ENCODE measurements at regions of chr2 and their contacts with region 1.

Region 1: DNA sequence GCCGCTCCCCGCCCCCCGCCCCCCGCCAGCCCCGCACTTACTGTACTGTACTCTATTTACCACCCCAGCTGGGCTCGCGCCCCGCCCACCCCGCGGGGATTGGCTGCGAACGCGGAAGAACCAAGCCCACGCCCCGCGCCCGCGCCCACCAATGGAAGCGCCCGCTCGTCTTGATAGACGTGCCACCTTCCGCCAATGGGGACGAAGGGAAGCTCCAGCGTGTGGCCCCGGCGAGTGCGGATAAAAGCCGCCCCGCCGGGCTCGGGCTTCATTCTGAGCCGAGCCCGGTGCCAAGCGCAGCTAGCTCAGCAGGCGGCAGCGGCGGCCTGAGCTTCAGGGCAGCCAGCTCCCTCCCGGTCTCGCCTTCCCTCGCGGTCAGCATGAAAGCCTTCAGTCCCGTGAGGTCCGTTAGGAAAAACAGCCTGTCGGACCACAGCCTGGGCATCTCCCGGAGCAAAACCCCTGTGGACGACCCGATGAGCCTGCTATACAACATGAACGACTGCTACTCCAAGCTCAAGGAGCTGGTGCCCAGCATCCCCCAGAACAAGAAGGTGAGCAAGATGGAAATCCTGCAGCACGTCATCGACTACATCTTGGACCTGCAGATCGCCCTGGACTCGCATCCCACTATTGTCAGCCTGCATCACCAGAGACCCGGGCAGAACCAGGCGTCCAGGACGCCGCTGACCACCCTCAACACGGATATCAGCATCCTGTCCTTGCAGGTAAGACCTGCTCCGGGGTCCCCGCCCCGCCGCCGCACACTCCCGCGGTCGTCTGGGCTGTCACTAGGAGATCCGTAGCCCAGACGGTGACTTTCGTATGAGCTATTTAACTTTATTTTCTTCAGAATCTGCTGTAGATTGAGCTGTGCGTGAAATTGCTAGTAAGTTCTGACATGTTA is at the start of gene ID2:
- DNase-seq: peak; percentile 100
- H3K4me3 ChIP-seq: peak within 1 kb of the TSS; percentile 62 to 64
- H3K27ac ChIP-seq: peak within 1 kb of the TSS; percentile 97 to 98
- H3K4me1 ChIP-seq: peaks cover 5% of the 10 kb centered on the region
- H3K27me3 ChIP-seq: no peaks in the 10 kb centered on the region
- CTCF ChIP-seq: peak in 1 of 4 experiments; percentile 35
- POLR2A ChIP-seq: peak; percentile 99
- total RNA-seq, gene ID2: 172 to 238 TPM

Region 2: DNA sequence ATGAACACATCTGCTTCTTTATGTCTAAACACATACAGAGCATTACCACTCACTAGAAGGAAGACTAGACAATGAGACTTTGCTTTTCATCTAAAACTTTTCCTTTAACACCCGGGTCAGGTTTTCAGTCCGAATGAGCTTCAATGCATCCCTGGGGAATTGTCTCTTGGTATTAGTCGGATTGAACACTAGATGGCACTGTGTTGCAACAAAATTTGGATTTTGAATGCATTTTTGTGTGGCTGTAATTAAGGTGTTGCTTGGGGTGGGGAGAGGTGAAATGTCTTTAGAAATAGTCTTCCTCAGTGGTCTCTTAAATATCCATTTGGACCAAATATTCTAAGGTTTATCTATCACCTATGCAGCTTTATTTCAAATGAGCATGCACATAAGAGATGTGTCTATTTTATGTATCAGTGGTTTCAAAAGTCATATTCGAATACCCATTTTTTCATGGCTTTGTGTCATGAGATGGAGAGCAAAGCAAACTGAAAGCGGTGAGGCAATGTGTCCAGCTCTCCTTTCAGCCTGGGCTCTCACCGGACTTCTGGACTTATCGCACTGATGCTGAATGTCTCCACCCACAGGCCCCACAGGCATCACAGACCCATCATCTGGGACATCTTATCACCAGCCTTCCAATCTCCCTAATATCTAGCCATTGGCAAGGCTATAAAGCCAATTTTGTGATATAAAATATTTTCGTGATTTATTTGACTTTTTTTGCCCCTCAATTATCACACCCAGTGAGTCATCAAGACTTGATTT is 1254.6 kb before region 1 on chr2:
- intact Hi-C with region 1: loop called (anchors 2 kb)
- DNase-seq: no peak
- H3K4me3 ChIP-seq: no peak overlapping the region
- H3K27ac ChIP-seq: no peak overlapping the region
- H3K4me1 ChIP-seq: no peaks in the 10 kb centered on the region
- H3K27me3 ChIP-seq: no peaks in the 10 kb centered on the region
- CTCF ChIP-seq: peak; percentile 43 to 73 (median 66)
- POLR2A ChIP-seq: no peak

Region 3: DNA sequence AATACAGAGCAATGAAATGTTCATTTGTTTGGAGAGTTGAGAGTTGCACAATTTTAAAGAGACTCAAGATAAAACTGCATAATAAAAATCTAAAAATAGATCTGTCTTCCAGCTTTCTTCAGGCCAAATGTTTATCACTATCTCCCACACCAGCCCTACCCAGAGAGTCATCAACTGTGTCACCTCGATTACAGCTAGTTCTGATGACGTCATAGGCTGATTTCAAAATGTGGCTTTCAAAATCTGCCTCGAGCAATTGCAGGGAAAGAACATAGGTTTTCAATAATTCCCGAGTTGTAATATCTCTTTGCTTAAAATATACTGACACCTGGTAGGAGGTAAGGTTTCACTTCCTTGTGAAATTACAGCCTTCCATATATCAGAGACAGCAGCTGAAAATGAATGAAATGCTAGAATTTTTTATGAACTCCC is 677.8 kb before region 1 on chr2:
- intact Hi-C with region 1: loop called (anchors 2 kb)
- DNase-seq: no peak
- H3K4me3 ChIP-seq: no peak overlapping the region
- H3K27ac ChIP-seq: no peak overlapping the region
- H3K4me1 ChIP-seq: no peaks in the 10 kb centered on the region
- H3K27me3 ChIP-seq: no peaks in the 10 kb centered on the region
- CTCF ChIP-seq: no peak
- POLR2A ChIP-seq: no peak

Region 4: DNA sequence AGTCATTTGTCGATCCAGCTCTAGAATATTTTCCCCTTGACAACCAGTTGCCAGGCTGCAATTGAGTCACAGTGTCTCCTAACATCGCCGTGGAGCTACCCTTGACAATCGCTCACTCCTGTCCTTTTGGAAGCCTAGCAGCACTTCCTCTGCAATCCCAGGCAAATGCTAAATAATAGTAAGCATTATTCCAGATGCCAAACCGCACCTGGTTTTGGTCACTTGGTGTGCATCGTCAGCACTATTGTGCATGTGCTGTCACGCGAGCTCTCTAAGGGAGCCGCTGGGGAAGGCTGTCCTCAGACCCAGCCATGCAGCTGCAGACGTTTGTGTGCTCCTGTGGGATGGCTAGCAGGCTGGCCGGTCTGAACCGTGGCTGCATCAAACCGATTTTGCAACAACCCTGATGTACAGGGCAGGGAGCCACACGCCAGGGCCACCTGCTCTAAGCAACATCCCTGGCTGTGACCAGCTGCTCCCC is 549.6 kb before region 1 on chr2:
- intact Hi-C with region 1: loop called (anchors 10 kb)
- DNase-seq: no peak
- H3K4me3 ChIP-seq: no peak overlapping the region
- H3K27ac ChIP-seq: no peak overlapping the region
- H3K4me1 ChIP-seq: no peaks in the 10 kb centered on the region
- H3K27me3 ChIP-seq: no peaks in the 10 kb centered on the region
- CTCF ChIP-seq: no peak
- POLR2A ChIP-seq: no peak

Measured in prostate gland (tissue), 2 donors.